ENCODE measurements at regions of chr1 and their contacts with region 1.

Region 1: GRCh38 chr1:236103646-236104218 is 38.6 kb upstream of the GPR137B start:
- DNase-seq: no peak
- ATAC-seq: peak; percentile 49

Region 2: DNA sequence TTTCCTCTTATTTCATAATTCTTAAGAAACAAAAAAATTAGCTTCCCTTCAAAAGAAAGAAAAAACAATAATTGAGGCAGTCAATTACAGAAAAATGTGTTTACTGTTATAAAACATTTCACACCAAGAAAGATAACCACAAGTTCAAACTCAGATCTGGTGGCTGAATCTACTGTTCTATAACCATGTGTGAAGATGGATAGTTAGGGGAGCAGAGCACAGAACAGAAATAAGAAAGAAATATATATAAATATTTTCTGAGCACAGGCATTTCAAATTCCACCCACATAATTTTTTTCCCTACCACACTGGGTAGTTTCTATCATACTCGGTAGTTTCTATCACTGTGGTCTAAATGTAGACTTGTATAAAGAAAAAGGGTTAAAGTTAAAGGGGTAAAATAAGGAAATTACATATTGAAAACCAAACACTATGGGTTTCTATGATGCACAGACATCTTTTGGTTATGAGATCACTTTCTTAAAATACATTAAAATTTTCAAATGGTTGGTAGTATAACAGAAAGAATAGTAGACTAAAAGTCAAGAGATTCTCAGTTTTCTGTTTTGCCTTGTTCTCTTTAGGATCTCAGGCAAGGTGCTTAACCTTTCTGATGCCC is 247.8 kb before region 1 on chr1:
- intact Hi-C with region 1: no loop called
- DNase-seq: no peak
- ATAC-seq: no peak

Region 3: DNA sequence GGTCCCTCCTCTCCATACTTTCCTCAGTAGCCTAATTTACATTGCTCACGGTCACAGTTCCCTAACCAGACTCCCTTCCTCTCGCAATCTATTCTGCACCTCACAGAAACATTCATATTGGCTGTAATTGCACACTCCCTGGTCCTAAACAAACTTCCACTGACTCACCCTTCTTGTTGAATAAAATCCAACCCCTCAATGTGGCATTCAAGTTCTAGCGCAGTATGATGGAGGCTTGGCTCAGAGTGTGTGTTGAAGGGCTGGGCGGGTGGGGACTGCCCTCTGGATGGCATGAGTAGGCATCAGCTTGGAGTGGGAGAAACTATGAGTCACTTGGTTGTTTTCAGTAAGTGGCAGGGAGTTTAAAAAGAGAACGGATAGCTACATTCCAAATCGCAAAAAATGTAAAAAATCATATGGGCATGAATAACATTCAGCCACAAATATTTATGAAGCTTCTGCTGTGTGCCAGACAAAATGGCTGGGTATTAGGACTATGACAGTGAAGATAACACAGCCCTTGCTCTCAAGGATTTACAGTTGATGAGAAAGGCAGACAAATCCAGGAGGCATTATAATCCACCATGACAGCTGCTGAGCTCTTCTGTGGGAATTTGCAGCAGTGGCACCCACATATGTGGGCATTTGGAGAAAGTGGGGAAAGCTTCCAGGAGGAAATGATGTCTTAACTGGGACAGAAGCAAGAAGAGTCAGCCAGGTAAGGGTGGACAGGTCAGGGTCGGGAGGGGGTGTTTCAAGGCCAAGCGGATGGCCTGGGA is 194.8 kb before region 1 on chr1:
- intact Hi-C with region 1: no loop called
- DNase-seq: no peak
- ATAC-seq: no peak

Region 4: DNA sequence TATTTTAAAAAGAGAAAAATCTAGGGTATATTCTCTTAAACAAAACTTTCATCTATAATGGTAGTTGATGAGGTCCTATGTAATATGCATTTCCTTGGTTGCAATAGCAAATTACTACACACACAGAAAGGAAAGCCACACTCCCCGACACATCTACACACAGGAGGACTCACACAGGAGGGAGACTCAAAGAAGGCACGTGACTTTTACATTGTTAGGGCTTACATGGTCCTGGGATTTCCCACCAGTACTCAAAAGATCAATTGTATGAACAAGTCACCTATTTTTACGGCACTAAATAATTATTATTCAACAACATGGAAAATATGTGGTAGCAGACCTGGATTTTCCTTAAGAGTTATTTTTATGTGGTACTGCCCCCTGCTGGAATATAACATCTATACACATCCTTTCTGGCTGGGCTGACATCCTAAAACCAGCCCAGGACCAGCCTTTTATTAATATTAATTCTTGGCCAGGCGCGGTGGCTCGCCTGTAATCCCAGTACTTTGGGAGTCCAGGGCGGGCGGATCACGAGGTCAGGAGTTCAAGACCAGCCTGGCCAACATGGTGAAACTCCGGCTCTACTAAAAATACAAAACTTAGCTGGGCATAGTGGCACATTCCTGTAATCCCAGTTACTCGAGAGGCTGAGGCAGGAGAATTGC is 386.1 kb after region 1 on chr1:
- intact Hi-C with region 1: loop called (anchors 10 kb)
- DNase-seq: peak; percentile 35
- ATAC-seq: peak; percentile 47